ENCODE measurements at regions of chr9 and their contacts with region 1.

Region 1: GRCh38 chr9:99819856-99820684 is 1.6 kb upstream of the NR4A3 start:
- DNase-seq: peak; percentile 98
- ATAC-seq: peak; percentile 73

Region 2: DNA sequence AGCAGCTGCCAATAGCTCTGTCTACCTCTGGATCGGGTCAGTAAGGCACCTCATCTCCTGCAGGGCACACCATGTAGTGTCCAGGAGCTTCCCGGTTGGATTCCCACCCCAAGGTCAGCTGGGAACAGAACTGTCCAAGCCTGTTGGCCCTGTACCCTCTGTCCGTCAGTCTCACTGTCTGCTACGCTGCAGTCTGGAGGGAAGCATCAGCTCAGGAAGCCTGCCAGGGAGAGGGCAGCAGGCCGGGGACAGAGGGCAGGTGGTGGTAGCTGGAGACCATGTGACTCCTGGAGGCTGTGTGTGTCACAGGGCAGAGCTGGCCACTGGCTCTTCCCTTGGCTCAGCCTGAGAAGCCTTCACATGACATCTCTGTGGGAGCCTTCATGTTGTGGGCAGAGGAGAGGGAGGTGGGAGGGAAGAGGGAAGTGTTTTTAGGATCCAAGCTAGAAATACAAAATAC is 463.5 kb before region 1 on chr9:
- intact Hi-C with region 1: loop called (anchors 5 kb)
- DNase-seq: peak; percentile 78
- ATAC-seq: peak; percentile 73

Region 3: DNA sequence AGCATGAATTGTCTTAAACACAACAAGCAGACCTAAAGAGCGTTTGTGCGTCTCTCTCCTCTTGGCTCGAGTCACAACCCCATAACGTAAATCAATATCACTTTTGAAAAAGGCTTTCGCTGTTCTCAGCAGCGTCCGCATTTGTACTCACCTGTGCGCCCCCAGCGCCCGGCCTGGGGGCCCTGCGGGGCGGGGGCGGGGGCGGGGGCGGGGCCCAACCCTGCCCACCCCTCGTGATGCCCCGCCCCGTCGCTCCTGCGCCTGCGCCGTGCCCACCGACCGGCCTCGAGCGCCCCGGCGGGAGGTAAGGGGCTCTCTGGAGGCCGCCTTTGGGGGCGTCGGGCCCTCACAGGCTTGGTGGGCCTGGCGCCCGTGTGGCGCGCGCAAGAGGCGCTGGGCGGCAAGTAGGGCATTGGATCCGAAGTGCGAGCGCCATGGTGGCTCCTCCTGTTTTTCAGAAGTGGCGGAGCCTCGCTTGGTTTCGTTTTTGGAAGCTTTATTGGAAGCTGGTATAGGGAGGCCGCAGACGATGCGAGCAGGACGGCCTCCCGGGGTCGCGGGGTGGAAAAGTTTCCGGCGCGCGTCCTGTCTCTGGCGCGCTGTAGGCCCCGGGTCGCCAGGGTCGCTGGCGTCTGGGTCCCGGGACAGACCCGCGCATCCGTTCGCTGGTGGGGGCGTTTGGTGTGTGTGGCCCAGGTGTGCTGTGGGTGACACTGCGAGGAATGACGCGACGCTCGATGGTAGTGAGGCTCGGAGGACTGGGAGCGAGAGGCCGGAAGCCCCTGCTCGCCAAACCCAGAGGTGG is 86.5 kb after region 1 on chr9 and contains the start of gene STX17:
- intact Hi-C with region 1: no loop called
- DNase-seq: peak; percentile 88
- ATAC-seq: peak; percentile 99
- total RNA-seq, gene STX17: 25.1 TPM

Measured in left ventricle myocardium superior (tissue), 1 donor.